Left colon (tissue), 2 donors: ENCODE measurements at regions of chr15 and their contacts with region 1.

Region 1: DNA sequence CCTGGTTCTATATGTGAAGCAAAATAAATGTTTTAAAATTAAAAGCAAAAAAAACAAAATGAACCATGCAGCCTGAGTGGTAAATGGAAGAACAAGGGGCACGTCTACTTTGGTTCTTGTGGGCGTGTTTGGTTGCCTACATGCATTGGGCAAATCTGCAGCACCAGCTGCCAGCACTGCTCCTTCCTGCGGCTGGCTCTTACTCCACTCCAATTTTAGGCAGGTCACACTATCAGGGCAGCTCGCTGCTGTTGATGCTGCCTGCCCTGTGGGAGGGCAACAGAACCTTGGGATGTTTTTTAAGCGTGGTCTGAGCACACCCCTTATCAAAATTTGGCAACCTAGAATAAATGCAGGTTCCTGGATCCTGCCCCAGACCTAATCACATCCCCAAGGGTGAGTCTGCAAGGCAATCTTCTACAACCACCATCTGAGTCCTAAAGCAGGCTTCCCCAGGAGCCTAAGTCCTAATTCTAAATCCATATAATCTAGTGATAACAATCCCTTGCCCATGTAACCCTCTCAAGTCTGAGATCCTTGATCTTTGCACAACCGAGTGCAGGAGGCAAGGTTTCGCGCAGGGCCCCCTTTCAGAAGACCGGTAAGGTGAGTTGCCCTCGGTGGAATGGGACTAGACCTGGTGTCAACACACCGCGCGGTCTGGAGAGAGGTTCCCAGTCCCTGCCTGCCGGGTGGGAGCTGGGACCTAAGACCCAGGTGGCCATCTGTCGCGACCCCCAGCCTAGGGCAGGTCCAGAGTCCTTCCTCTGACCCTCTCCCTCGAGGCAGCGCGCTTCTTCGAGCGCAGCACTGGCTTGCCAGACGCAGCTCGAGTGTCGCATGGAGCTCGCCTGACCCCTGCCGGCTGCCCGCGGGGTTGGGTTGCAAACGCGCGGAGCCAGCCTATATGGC is 15.9 kb downstream of the IVD start:
- DNase-seq: peak; percentile 70 to 88
- ATAC-seq: peak; percentile 86

Region 2: GRCh38 chr15:40310001-40310959 is 111.2 kb before region 1 on chr15:
- intact Hi-C with region 1: loop called in 1 of 2 experiments (anchors 10 kb)
- DNase-seq: peak in 1 of 2 donors; percentile 64
- ATAC-seq: peak; percentile 62

Region 3: GRCh38 chr15:40379853-40380252 is 41.6 kb before region 1 on chr15:
- intact Hi-C with region 1: loop called in 1 of 2 experiments (anchors 10 kb)
- DNase-seq: peak in 1 of 2 donors; percentile 51
- ATAC-seq: no peak